ENCODE measurements at regions of chr5 and their contacts with region 1.

Region 1: GRCh38 chr5:67209142-67209771 is 12.7 kb upstream of the CD180 start:
- DNase-seq: peak; percentile 79
- H3K4me3 ChIP-seq: no peak overlapping the region; a peak in 1 of 4 replicates
- H3K27ac ChIP-seq: no peak overlapping the region
- H3K4me1 ChIP-seq: peaks cover 0 to 10% of the 10 kb centered on the region in 2 experiments; a peak in 2 of 4 replicates
- H3K27me3 ChIP-seq: no peaks in the 10 kb centered on the region
- CTCF ChIP-seq: peak; percentile 73
- EP300 ChIP-seq: 0 out of 4 replicates have a peak, but pooled peaks of 1 of the 2 experiments have one; percentile 19
- RAD21 ChIP-seq: peak; percentile 95

Region 2: GRCh38 chr5:67149951-67150523 is 59.2 kb before region 1 on chr5:
- CTCF ChIA-PET with region 1: interaction called, 201 read pairs
- POLR2A ChIA-PET with region 1: no interaction called
- DNase-seq: peak; percentile 43
- H3K4me3 ChIP-seq: no peak overlapping the region
- H3K27ac ChIP-seq: no peak overlapping the region
- H3K4me1 ChIP-seq: no peaks in the 10 kb centered on the region
- H3K27me3 ChIP-seq: no peaks in the 10 kb centered on the region
- CTCF ChIP-seq: peak; percentile 73
- EP300 ChIP-seq: no peak
- RAD21 ChIP-seq: peak; percentile 87

Region 3: GRCh38 chr5:67165526-67166459 is 43.5 kb before region 1 on chr5:
- CTCF ChIA-PET with region 1: interaction called, 201 read pairs
- POLR2A ChIA-PET with region 1: no interaction called
- DNase-seq: peak; percentile 41
- H3K4me3 ChIP-seq: no peak overlapping the region
- H3K27ac ChIP-seq: no peak overlapping the region
- H3K4me1 ChIP-seq: peaks cover 4 to 8% of the 10 kb centered on the region in 2 experiments; a peak in 2 of 4 replicates
- H3K27me3 ChIP-seq: no peaks in the 10 kb centered on the region
- CTCF ChIP-seq: peak; percentile 23; the same call in 1 of the 2 replicates
- EP300 ChIP-seq: no peak
- RAD21 ChIP-seq: peak; percentile 18; the same call in 1 of the 2 replicates

Region 4: GRCh38 chr5:67287510-67288268 is 78.4 kb after region 1 on chr5:
- CTCF ChIA-PET with region 1: no interaction called
- POLR2A ChIA-PET with region 1: no interaction called
- DNase-seq: no peak
- H3K4me3 ChIP-seq: no peak overlapping the region
- H3K27ac ChIP-seq: peak overlapping the region; percentile 36 to 38; a peak in 2 of 4 replicates
- H3K4me1 ChIP-seq: peaks cover 0 to 13% of the 10 kb centered on the region in 2 experiments; a peak in 1 of 4 replicates
- H3K27me3 ChIP-seq: no peaks in the 10 kb centered on the region
- CTCF ChIP-seq: no peak
- EP300 ChIP-seq: peak; percentile 5 to 18; a peak in 1 of 4 replicates
- RAD21 ChIP-seq: no peak

Region 5: GRCh38 chr5:67502951-67503350 is 293.7 kb after region 1 on chr5:
- CTCF ChIA-PET with region 1: no interaction called
- POLR2A ChIA-PET with region 1: no interaction called
- DNase-seq: no peak
- H3K4me3 ChIP-seq: no peak overlapping the region
- H3K27ac ChIP-seq: no peak overlapping the region
- H3K4me1 ChIP-seq: no peaks in the 10 kb centered on the region
- H3K27me3 ChIP-seq: no peaks in the 10 kb centered on the region
- CTCF ChIP-seq: no peak
- EP300 ChIP-seq: no peak
- RAD21 ChIP-seq: no peak